ENCODE measurements at regions of chr12 and their contacts with region 1.

Region 1: GRCh38 chr12:107131832-107132616 is 38.7 kb upstream of the CRY1 start:
- H3K4me3 Mint-ChIP-seq: no peak overlapping the region
- H3K27ac Mint-ChIP-seq: no peak overlapping the region
- H3K4me1 Mint-ChIP-seq: no peaks in the 10 kb centered on the region
- H3K27me3 Mint-ChIP-seq: no peaks in the 10 kb centered on the region

Region 2: GRCh38 chr12:107145397-107145796 is 13.4 kb after region 1 on chr12:
- intact Hi-C with region 1: no loop called
- H3K4me3 Mint-ChIP-seq: no peak overlapping the region
- H3K27ac Mint-ChIP-seq: no peak overlapping the region
- H3K4me1 Mint-ChIP-seq: no peaks in the 10 kb centered on the region
- H3K27me3 Mint-ChIP-seq: no peaks in the 10 kb centered on the region

Region 3: GRCh38 chr12:107402041-107403022 is 270.3 kb after region 1 on chr12:
- intact Hi-C with region 1: loop called (anchors 1 kb)
- H3K4me3 Mint-ChIP-seq: no peak overlapping the region
- H3K27ac Mint-ChIP-seq: no peak overlapping the region
- H3K4me1 Mint-ChIP-seq: peaks cover 11% of the 10 kb centered on the region
- H3K27me3 Mint-ChIP-seq: no peaks in the 10 kb centered on the region

Region 4: DNA sequence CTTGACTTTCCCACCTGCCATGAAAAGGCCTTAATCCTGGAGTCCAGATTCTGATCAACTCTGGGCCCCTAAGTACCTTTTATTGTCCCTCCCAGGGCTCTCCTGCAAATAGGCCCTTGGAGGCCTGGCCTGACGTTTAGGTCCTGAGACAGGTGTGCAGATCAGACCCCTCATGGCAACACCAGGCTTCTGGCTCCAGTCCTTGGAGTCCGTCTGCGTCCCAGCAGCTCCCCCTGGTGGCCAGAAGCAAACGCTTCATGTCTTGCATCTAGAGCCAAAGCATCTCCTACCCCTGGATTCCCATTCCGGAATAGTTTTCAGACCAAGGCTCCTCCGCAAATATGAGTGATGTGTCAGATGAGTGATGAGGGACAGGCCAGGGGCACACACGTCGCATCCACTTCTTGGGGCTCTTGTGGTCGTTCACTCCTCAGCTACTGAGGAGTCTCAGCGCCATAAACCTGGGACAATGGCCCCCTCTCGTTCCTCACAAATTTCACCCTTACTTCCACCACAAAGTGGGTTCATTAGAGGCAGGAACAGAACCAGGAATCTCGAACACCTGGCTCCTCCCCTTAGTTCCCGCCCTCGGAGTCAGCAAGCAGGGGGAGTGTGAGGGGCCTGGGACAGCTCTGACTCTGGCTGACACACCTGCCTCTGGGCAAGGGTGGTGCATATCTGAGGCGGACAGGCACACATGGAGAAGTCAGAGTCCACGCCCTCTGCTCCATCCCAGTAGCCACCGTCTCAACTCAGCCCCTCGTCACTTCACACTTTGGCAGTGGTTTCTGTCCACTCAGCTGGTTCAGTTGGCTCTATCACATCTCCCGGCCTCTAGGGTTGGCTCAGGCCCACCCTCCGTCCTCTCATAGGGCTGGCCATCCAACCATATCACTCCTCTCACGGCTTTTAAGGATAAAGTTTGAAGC is 475.7 kb after region 1 on chr12:
- intact Hi-C with region 1: loop called (anchors 1 kb)
- H3K4me3 Mint-ChIP-seq: no peak overlapping the region
- H3K27ac Mint-ChIP-seq: no peak overlapping the region
- H3K4me1 Mint-ChIP-seq: no peaks in the 10 kb centered on the region
- H3K27me3 Mint-ChIP-seq: no peaks in the 10 kb centered on the region